H1 (cell line): ENCODE measurements at regions of chr2 and their contacts with region 1.

Region 1: DNA sequence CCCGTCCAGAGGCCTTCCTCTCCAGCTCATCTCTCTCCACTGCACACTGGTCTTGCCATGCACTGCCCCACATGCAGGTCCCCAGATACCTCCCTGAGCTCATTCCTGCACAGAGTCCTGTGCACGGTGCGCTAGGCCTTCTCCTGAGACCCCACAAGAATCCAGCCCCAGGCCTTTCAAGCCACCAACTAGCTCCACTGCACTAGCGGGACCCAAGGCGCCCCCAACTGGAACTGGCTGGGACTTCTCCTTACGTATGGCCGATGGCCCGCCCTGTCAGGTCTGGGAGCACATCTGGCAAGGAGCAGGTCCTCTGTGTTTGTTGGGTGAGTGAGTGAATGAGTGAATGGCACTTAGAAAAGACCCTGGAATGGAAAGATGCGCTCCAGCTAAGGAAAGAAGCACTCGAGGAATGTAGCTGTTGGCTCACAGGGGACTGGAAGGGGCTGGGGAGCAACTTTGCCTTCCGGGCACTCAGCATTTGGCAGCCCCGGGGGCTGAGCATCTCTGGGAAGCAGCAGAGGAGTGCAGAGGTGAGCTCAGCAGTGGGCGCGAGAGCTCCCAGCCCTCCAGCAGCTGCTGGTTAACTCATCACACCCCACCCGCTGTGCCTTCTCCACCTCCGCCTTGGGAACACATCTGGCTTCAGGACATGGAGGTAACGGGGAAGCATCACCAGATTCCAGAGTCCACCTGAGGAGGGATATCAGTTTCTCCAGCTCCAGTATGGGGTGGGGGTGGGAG is 223.1 kb downstream of the GLI2 start:
- DNase-seq: peak; percentile 17 to 93
- H3K4me3 ChIP-seq: no peak overlapping the region
- H3K27ac ChIP-seq: no peak overlapping the region
- H3K4me1 ChIP-seq: no peaks in the 10 kb centered on the region
- H3K27me3 ChIP-seq: no peaks in the 10 kb centered on the region
- CTCF ChIP-seq: peak in 2 of 3 experiments; percentile 79 to 83; a peak in 3 of 4 replicates
- EP300 ChIP-seq: no peak
- POLR2A ChIP-seq: no peak
- RAD21 ChIP-seq: peak; percentile 78 to 86

Region 2: GRCh38 chr2:120453635-120453998 is 505.2 kb before region 1 on chr2:
- CTCF ChIA-PET with region 1: no interaction called
- POLR2A ChIA-PET with region 1: no interaction called
- DNase-seq: no peak
- H3K4me3 ChIP-seq: no peak overlapping the region
- H3K27ac ChIP-seq: no peak overlapping the region
- H3K4me1 ChIP-seq: peaks cover 0 to 2% (median 0%) of the 10 kb centered on the region in 4 experiments; a peak in 2 of 7 replicates
- H3K27me3 ChIP-seq: peaks cover 0 to 19% (median 9%) of the 10 kb centered on the region in 4 experiments; a peak in 3 of 7 replicates
- CTCF ChIP-seq: no peak
- EP300 ChIP-seq: no peak
- POLR2A ChIP-seq: no peak
- RAD21 ChIP-seq: no peak

Region 3: GRCh38 chr2:120703330-120703994 is 255.3 kb before region 1 on chr2:
- CTCF ChIA-PET with region 1: interaction called, 12 read pairs
- POLR2A ChIA-PET with region 1: no interaction called
- DNase-seq: no peak
- H3K4me3 ChIP-seq: no peak overlapping the region
- H3K27ac ChIP-seq: no peak overlapping the region
- H3K4me1 ChIP-seq: peaks cover 2 to 22% (median 8%) of the 10 kb centered on the region in 4 experiments
- H3K27me3 ChIP-seq: peaks cover 0 to 11% (median 6%) of the 10 kb centered on the region in 4 experiments; a peak in 3 of 7 replicates
- CTCF ChIP-seq: no peak
- EP300 ChIP-seq: no peak
- POLR2A ChIP-seq: no peak
- RAD21 ChIP-seq: no peak

Region 4: DNA sequence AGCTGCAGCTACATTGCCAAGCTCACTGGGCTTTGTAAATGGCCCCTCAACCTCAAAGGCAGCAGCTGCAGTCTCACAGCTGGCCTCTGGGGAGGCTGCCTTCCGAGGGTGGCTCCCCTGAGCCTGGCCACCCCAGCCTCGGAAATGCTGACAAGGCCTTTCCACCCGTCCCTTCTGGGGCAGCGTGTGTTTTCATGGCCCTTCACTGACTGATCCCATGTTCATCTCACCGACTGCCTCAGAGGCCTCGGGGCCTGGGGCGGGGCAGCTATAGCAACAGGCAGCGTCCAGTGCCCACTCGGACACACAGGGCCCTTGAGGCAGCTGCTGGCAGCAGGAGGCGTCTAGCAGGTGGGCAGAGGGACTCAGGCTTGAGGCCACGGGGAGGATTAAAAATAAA is 73.5 kb before region 1 on chr2:
- CTCF ChIA-PET with region 1: interaction called, 21 read pairs
- POLR2A ChIA-PET with region 1: interaction called, 4 read pairs
- DNase-seq: no peak
- H3K4me3 ChIP-seq: no peak overlapping the region
- H3K27ac ChIP-seq: no peak overlapping the region
- H3K4me1 ChIP-seq: peaks cover 0 to 16% (median 11%) of the 10 kb centered on the region in 4 experiments; a peak in 6 of 7 replicates
- H3K27me3 ChIP-seq: no peaks in the 10 kb centered on the region
- CTCF ChIP-seq: peak in 2 of 3 experiments; percentile 45 to 48; a peak in 3 of 4 replicates
- EP300 ChIP-seq: no peak
- POLR2A ChIP-seq: no peak
- RAD21 ChIP-seq: peak; percentile 12 to 28; a peak in 2 of 4 replicates

Region 5: DNA sequence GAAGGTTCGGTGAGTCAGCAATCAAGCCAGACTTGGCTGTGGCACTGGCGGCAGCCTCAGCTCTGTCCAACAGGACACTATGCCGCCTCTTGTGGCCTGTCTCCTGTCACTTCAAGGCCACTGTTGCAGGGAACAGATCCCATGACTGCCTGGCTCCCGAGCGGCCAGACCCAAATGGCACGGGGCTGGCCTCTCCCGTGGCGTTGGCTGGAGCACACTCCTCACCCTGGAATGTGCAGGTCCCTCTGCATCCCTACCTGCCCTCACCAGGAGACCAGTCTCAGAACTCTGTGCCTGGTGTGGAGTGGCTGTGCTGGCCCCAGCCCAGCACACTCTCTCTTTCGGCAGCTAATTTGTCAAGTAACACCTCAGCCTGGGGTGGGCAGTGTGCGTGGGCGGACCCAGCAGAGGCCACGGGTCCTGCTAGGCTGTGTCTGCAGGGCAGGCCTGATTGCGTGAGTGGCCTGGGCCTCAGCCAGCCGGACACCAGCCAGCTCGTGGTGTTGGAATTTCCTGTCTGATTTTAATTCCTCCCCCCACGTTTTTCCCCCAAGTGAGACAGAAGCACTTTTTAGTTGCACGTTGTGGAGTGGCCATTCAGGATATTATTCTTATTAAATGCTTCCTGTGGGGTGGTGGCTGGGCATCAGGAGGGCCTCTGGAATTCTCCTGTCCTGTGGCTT is 43.8 kb before region 1 on chr2:
- CTCF ChIA-PET with region 1: interaction called, 24 read pairs
- POLR2A ChIA-PET with region 1: no interaction called
- DNase-seq: no peak
- H3K4me3 ChIP-seq: no peak overlapping the region
- H3K27ac ChIP-seq: no peak overlapping the region; the same call in 1 of the 2 replicates
- H3K4me1 ChIP-seq: peaks cover 0 to 12% (median 8%) of the 10 kb centered on the region in 4 experiments; a peak in 6 of 7 replicates
- H3K27me3 ChIP-seq: no peaks in the 10 kb centered on the region
- CTCF ChIP-seq: no peak
- EP300 ChIP-seq: no peak
- POLR2A ChIP-seq: no peak
- RAD21 ChIP-seq: no peak

Region 6: GRCh38 chr2:120969613-120970355 is 11.0 kb after region 1 on chr2:
- CTCF ChIA-PET with region 1: interaction called, 40 read pairs
- POLR2A ChIA-PET with region 1: interaction called, 4 read pairs
- DNase-seq: no peak
- H3K4me3 ChIP-seq: no peak overlapping the region
- H3K27ac ChIP-seq: no peak overlapping the region
- H3K4me1 ChIP-seq: no peaks in the 10 kb centered on the region; a peak in 2 of 7 replicates
- H3K27me3 ChIP-seq: no peaks in the 10 kb centered on the region
- CTCF ChIP-seq: no peak
- EP300 ChIP-seq: no peak
- POLR2A ChIP-seq: no peak
- RAD21 ChIP-seq: no peak

Region 7: GRCh38 chr2:121038891-121039616 is 80.3 kb after region 1 on chr2:
- CTCF ChIA-PET with region 1: interaction called, 11 read pairs
- POLR2A ChIA-PET with region 1: no interaction called
- DNase-seq: no peak
- H3K4me3 ChIP-seq: no peak overlapping the region
- H3K27ac ChIP-seq: no peak overlapping the region
- H3K4me1 ChIP-seq: peaks cover 0 to 3% (median 0%) of the 10 kb centered on the region in 4 experiments; a peak in 1 of 7 replicates
- H3K27me3 ChIP-seq: peaks cover 0 to 4% (median 2%) of the 10 kb centered on the region in 4 experiments; a peak in 3 of 7 replicates
- CTCF ChIP-seq: no peak
- EP300 ChIP-seq: no peak
- POLR2A ChIP-seq: no peak
- RAD21 ChIP-seq: no peak

Region 8: DNA sequence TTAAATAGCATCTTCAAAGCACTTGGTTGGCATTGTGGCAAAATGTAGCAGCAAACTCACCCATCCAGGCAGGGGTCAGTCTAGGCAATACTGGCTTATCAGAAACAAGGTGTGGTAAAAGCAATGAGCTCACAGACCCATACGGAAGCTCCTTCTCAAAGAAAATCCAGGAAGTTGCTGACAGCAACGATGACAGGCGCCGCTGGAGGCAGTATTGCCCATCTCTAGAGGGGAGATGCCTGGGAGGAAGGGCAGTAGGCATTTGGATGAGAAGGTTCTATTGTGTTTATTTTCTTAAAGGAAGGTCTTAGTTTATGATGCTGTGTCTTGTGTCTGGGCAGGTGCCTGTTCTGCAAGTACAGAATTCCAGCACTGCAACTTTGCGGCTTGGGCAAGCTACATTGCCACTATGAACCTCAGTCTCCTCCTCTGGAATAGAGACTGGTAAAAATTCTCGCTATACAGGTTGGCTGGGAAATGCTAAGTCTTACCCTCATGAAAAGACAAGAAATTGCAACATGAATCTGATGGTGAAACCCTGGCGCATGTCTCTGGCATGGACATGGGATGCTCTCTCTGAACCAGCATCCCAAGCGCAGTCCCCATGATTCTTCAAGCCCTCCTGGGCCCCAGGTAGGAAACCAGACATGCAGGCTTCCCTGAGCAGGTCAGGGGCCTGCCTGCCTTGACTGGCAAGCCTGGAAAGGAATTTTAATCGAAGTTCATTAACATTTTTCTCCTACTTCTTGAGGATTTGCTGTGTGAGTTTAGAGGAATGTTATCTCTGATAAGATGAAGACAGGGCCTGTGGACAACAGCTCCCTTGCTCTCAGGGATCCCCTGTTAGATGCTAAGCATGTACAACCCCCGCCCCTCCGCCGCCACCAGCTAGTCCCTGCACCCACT is 170.2 kb after region 1 on chr2:
- CTCF ChIA-PET with region 1: no interaction called
- POLR2A ChIA-PET with region 1: no interaction called
- DNase-seq: peak in 1 of 2 experiments; percentile 78
- H3K4me3 ChIP-seq: no peak overlapping the region
- H3K27ac ChIP-seq: no peak overlapping the region
- H3K4me1 ChIP-seq: peaks cover 3 to 26% (median 13%) of the 10 kb centered on the region in 4 experiments
- H3K27me3 ChIP-seq: peaks cover 0 to 6% (median under 1%) of the 10 kb centered on the region in 4 experiments; a peak in 2 of 7 replicates
- CTCF ChIP-seq: peak; percentile 75 to 95 (median 80)
- EP300 ChIP-seq: no peak
- POLR2A ChIP-seq: no peak
- RAD21 ChIP-seq: peak; percentile 82 to 86

Region 9: GRCh38 chr2:121699421-121700333 is 740.9 kb after region 1 on chr2:
- CTCF ChIA-PET with region 1: no interaction called
- POLR2A ChIA-PET with region 1: no interaction called
- DNase-seq: no peak
- H3K4me3 ChIP-seq: no peak overlapping the region
- H3K27ac ChIP-seq: no peak overlapping the region
- H3K4me1 ChIP-seq: peaks cover 0 to 10% (median 6%) of the 10 kb centered on the region in 4 experiments; a peak in 3 of 7 replicates
- H3K27me3 ChIP-seq: no peaks in the 10 kb centered on the region
- CTCF ChIP-seq: no peak
- EP300 ChIP-seq: no peak
- POLR2A ChIP-seq: no peak
- RAD21 ChIP-seq: no peak